Activated CD4-positive, alpha-beta T cell treated with anti-CD3 and anti-CD28 coated beads for 36 hours (primary cell): ENCODE measurements at regions of chr5 and their contacts with region 1.

Region 1: DNA sequence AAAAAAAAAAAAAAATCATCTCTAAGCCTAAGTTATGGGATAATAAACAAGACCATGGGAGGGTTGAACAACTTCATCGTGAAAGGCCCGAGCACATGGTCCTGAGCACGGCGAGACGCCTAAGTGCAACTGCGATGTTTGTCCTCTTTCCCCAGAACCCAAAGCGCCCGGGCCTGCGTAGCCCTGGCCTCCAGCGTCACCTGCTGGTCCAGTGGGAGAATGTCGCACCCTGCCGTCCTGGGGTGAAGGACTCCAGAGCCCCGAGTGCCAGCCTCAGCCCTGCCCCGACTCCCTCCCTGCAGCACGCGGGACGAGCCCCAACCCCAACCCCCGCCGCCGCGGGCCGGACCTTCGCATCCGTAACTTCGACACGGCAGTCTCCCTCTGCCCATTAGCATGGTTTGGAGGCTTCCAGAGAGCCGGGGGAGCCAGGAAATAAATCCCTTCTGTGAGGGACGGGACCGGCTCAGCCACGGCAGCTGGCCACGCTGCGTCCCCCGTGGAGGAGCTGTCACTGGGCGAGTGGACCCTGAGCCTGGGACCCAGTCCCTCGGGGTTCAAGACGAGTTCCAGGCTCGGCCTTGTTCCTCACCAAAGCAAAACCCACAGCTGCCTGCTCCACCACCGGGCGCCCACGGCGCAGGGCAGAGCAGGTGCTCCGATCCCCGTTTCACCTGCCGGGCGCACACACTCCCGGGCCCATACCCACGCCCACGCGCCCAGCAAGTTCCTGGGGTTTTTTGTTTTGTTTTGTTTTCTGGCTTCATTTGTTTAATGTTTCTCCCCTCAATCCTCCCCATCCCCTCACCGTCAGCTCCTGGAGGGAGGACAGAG is 132.5 kb upstream of the HAND1 start:
- DNase-seq: peak; percentile 89
- ATAC-seq: peak; percentile 98
- H3K4me3 Mint-ChIP-seq: peak overlapping the region; percentile 22
- H3K27ac Mint-ChIP-seq: no peak overlapping the region
- H3K4me1 Mint-ChIP-seq: peaks cover 7% of the 10 kb centered on the region
- H3K27me3 Mint-ChIP-seq: peaks cover 36% of the 10 kb centered on the region

Region 2: DNA sequence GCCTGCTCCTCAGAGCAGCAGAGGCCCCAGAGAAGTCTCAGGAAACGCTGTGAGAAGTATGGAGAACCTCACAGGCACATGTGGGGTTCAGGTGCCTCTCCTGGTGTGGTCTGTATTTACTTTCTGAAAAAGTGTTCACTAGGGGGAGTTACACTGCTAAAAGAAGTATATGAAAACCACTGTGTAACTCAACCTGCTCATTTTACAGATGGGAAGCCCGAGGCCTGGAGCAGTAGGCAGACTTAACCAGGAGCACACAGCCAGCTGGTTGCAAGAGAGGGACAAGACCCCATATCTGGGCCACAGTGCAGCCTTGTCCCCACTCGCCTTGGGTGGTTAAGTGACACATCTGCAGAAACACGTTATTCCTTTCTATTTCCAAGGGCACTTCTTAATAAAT is 277.5 kb before region 1 on chr5:
- CTCF ChIA-PET with region 1: no interaction called
- POLR2A ChIA-PET with region 1: no interaction called
- intact Hi-C with region 1: no loop called
- DNase-seq: no peak
- ATAC-seq: no peak
- H3K4me3 Mint-ChIP-seq: no peak overlapping the region
- H3K27ac Mint-ChIP-seq: no peak overlapping the region
- H3K4me1 Mint-ChIP-seq: no peaks in the 10 kb centered on the region
- H3K27me3 Mint-ChIP-seq: no peaks in the 10 kb centered on the region

Region 3: DNA sequence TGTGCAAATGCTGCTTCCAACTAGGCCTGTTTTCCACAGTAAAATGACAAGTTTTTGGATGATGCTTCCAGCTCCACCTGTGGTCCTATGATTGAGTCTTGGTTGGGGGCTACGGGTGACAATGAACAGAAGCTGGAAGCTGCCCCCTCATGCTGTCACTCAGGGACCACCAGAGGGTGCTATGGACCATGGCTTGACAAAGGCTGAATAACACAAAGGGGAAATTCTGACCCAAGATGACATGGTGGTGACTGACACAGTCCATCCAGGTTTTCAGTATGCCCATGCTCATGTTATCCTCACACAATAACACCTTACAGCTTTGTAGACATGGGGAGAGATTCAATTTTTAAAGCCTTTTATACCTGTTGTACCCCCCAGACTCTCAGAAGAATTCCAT is 188.7 kb before region 1 on chr5:
- CTCF ChIA-PET with region 1: interaction called, 3 read pairs
- POLR2A ChIA-PET with region 1: no interaction called
- intact Hi-C with region 1: loop called in 1 of 2 experiments (anchors 2 kb)
- DNase-seq: peak; percentile 33
- ATAC-seq: no peak
- H3K4me3 Mint-ChIP-seq: no peak overlapping the region
- H3K27ac Mint-ChIP-seq: no peak overlapping the region
- H3K4me1 Mint-ChIP-seq: peaks cover 2% of the 10 kb centered on the region
- H3K27me3 Mint-ChIP-seq: no peaks in the 10 kb centered on the region

Region 4: DNA sequence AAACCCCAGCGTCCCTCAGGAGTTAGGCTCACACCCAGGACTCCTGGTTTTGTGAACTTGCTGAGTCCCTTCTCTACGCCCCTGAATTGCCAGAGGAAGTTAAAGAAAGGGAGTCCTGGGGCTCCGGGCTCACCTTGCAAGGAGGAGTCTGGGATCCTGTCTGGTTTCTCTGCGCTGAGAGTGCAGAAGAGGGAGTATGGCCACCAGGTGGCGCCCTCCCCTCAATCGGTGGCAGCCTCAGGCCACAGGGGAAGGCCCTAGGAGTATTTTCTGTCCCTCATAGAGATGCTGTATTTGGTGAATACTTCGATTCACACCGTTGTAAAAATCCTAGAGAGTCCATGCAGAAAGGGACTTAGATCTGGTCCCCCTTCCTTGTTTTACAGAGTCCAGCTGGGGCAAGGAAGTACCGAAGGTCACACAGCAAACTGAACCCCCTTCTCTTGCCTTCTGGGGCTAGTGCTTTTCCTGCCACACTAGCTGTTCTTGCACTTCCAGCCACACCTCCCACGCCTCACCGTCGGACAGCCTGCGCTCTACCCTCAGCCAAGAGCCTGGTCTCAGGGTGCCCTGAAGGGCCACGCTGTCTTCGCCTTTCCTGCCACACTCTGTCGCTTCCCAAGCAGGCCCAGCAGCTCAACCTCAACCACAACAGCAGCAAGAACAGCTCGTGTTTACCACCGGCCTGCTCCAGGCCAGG is 142.7 kb before region 1 on chr5:
- CTCF ChIA-PET with region 1: interaction called, 73 read pairs
- POLR2A ChIA-PET with region 1: no interaction called
- intact Hi-C with region 1: loop called (anchors 1 kb)
- DNase-seq: peak; percentile 90
- ATAC-seq: peak; percentile 98
- H3K4me3 Mint-ChIP-seq: no peak overlapping the region
- H3K27ac Mint-ChIP-seq: no peak overlapping the region
- H3K4me1 Mint-ChIP-seq: peaks cover 7% of the 10 kb centered on the region
- H3K27me3 Mint-ChIP-seq: peaks cover 31% of the 10 kb centered on the region

Region 5: GRCh38 chr5:154520861-154521453 is 89.6 kb before region 1 on chr5:
- CTCF ChIA-PET with region 1: interaction called, 5 read pairs
- POLR2A ChIA-PET with region 1: no interaction called
- intact Hi-C with region 1: loop called in 1 of 2 experiments (anchors 1 kb)
- DNase-seq: peak; percentile 30
- ATAC-seq: no peak
- H3K4me3 Mint-ChIP-seq: no peak overlapping the region
- H3K27ac Mint-ChIP-seq: no peak overlapping the region
- H3K4me1 Mint-ChIP-seq: no peaks in the 10 kb centered on the region
- H3K27me3 Mint-ChIP-seq: peaks cover 39% of the 10 kb centered on the region